Activated T-helper 1 cell treated with anti-CD3 and anti-CD28 coated beads, Interleukin-12 subunit alpha, Interleukin-12 subunit beta, Interleukin-2, Interleukin-4 antibody, amounts not matched to agents 30 ng/mL and 10 ng/mL and 1 ng/mL, durations not matched to agents 14 hours and 24 hours and 36 hours (primary cell): ENCODE measurements at regions of chr3 and their contacts with region 1.

Region 1: GRCh38 chr3:185308126-185308754 is 54.4 kb upstream of the EHHADH start:
- DNase-seq: peak; percentile 27
- H3K4me3 Mint-ChIP-seq: no peak overlapping the region
- H3K27ac Mint-ChIP-seq: no peak overlapping the region
- H3K4me1 Mint-ChIP-seq: peaks cover 4% of the 10 kb centered on the region
- H3K27me3 Mint-ChIP-seq: no peaks in the 10 kb centered on the region

Region 2: GRCh38 chr3:184777336-184778004 is 530.8 kb before region 1 on chr3:
- intact Hi-C with region 1: no loop called
- DNase-seq: peak; percentile 69
- H3K4me3 Mint-ChIP-seq: no peak overlapping the region
- H3K27ac Mint-ChIP-seq: no peak overlapping the region
- H3K4me1 Mint-ChIP-seq: no peaks in the 10 kb centered on the region
- H3K27me3 Mint-ChIP-seq: peaks cover 17% of the 10 kb centered on the region

Region 3: DNA sequence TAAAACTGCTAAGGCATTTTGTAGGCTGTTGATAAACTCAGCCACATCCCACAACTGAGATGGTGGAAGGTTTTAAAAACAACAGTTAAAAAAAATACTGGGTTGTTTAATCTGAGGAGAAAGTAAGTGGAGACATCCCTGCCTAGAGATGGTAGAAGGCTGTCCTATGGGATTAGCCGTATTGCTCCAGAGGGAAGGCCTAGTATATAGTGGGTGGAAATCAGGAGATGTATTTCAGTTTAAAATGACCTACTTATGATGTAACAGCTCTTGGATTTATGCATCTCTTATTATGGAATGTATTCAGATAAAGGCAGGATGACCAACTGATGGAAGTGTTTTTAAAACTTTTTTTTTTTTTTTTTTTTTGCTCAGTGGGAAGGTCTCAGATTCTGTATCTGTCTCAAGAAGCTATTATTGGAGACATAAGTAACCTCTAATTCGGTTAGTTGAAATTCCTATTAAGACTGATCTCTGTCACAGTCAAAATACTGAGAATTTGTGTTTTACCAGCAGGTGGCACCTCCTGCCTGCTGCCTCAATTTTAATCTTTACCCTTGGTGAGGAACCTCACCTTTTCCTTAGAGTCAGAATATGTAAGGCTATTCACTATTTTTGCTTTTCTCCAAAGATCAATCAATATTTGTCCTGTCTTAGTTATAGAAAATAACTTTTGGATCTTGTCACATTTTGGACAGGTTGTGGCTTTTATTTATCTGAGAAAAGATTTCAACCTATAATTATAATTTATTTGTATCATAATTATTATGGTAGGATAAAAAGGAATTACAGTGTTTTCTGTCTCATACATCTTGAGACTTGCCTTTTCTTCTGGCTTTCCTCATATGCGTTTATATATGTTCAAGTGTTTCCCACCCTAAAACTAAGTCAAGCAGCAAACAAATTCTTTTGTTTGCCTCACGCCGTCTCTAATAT is 433.3 kb before region 1 on chr3:
- intact Hi-C with region 1: loop called (anchors 1 kb)
- DNase-seq: no peak
- H3K4me3 Mint-ChIP-seq: no peak overlapping the region
- H3K27ac Mint-ChIP-seq: no peak overlapping the region
- H3K4me1 Mint-ChIP-seq: peaks cover 21% of the 10 kb centered on the region
- H3K27me3 Mint-ChIP-seq: no peaks in the 10 kb centered on the region

Region 4: GRCh38 chr3:185290266-185290665 is 18.0 kb before region 1 on chr3:
- intact Hi-C with region 1: loop called (anchors 2 kb)
- DNase-seq: no peak
- H3K4me3 Mint-ChIP-seq: no peak overlapping the region
- H3K27ac Mint-ChIP-seq: no peak overlapping the region
- H3K4me1 Mint-ChIP-seq: no peaks in the 10 kb centered on the region
- H3K27me3 Mint-ChIP-seq: no peaks in the 10 kb centered on the region